PC-9 (cell line): ENCODE measurements at regions of chr9 and their contacts with region 1.

Region 1: DNA sequence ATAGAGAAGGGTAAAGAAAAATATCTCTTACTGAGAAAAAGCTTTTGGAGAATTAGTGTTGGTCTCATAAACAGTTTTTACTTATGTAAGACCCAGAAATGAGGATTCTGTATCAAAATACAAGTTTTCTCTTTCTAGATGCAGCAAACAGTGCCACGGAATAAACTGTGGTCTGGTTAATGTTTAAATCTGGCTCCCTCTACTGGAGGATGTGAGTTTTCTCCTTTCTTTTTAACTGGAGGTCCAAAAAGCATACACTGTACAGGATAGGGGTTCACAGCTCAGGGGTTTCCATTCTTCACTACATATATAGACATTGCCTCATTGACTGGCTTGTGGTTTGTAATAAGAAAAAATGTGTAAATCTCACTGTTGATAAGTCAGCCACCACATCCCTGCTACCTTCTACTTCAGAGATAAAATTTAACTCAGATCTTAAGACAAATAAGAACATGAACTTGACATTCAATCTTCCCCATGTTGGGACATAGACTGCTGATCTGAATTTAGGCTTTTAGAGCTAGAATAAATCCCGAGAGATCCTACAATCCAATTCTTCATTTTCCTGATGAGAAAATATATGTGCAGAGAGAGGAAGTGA is 98.9 kb downstream of the CFAP95 start:
- DNase-seq: peak; percentile 8 to 54
- H3K4me3 ChIP-seq: no peak overlapping the region
- H3K27ac ChIP-seq: no peak overlapping the region
- H3K4me1 ChIP-seq: 0 out of 2 replicates have a peak, but pooled peaks cover 3% of the 10 kb centered on the region
- H3K27me3 ChIP-seq: no peaks in the 10 kb centered on the region
- CTCF ChIP-seq: peak; percentile 81

Region 2: DNA sequence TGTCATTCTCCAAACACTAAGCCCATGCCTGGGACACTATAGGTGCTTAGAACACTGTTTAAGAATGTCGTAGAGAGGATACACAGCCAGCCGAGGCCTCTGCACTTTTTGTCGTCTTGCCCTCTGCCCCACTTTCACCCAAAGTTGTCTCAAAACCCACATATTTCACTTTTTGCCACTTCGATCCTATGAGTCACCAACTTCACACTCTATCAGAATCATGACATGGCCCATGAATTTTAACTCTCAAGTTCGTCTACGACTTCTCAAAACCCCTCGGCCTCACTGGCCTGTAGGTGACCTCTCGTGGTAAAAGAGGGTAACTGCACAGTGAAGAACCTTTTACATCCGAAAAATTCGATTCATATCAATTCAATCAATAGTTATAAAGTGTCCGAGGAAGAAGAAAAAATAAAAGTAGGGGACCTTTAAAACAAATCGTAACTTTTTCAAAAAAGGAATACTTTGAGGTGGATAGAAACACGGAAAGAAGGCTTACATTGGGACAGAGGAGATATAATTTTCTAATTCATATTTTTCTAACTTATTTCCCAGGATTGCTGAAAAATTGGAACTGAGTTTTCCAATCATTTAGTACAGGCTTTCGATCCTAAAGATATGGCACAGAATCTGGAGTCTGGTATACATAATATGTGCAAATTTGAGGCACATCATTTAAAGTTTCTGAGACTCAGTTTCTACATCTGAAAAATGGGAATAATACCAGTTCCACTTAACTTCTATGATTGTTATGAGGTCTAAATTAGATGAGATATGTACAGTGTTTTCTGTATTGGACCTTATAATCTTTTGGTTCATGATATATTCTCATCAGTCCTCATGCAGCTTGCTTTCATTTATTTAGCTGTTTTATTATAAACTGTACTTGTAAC is 370.0 kb before region 1 on chr9:
- CTCF ChIA-PET with region 1: no interaction called
- POLR2A ChIA-PET with region 1: no interaction called
- intact Hi-C with region 1: loop called (anchors 5 kb)
- DNase-seq: peak; percentile 29 to 40
- H3K4me3 ChIP-seq: no peak overlapping the region
- H3K27ac ChIP-seq: no peak overlapping the region
- H3K4me1 ChIP-seq: no peaks in the 10 kb centered on the region
- H3K27me3 ChIP-seq: 0 out of 2 replicates have a peak, but pooled peaks cover 4% of the 10 kb centered on the region
- CTCF ChIP-seq: peak; percentile 96

Region 3: GRCh38 chr9:69759421-69760277 is 159.9 kb before region 1 on chr9 and contains the start of gene PTAR1:
- CTCF ChIA-PET with region 1: no interaction called
- POLR2A ChIA-PET with region 1: no interaction called
- intact Hi-C with region 1: loop called (anchors 2 kb)
- DNase-seq: peak; percentile 61 to 92
- H3K4me3 ChIP-seq: peak within 1 kb of the TSS; percentile 67
- H3K27ac ChIP-seq: peak within 1 kb of the TSS; percentile 71
- H3K4me1 ChIP-seq: peaks cover 15% of the 10 kb centered on the region
- H3K27me3 ChIP-seq: no peaks in the 10 kb centered on the region
- CTCF ChIP-seq: no peak
- total RNA-seq, gene PTAR1: 44.9 and 47.3 TPM in 2 replicates

Region 4: GRCh38 chr9:69822091-69822750 is 97.3 kb before region 1 on chr9:
- CTCF ChIA-PET with region 1: no interaction called
- POLR2A ChIA-PET with region 1: no interaction called
- intact Hi-C with region 1: loop called (anchors 10 kb)
- DNase-seq: no peak
- H3K4me3 ChIP-seq: no peak overlapping the region
- H3K27ac ChIP-seq: no peak overlapping the region
- H3K4me1 ChIP-seq: no peaks in the 10 kb centered on the region
- H3K27me3 ChIP-seq: no peaks in the 10 kb centered on the region
- CTCF ChIP-seq: no peak

Region 5: DNA sequence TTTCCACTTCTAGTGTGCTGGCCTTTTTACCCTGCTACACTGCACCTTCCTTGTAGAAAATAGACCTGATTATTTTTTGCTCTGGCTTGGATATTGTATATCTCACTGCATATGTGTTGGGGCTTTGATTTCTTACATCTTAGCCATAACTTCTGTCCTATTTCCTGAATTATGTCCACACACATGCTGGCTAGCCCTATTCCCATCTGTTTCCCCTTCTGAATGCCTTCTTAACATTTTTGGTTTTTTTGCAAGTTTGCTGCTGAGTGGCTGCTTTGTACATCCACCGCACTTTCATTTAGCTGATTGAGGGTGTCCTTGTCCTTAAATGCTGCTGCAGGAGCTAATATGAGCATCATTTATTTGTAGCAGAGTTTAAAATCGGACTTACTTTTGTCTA is 72.1 kb before region 1 on chr9:
- CTCF ChIA-PET with region 1: interaction called, 13 read pairs
- POLR2A ChIA-PET with region 1: no interaction called
- intact Hi-C with region 1: no loop called
- DNase-seq: no peak
- H3K4me3 ChIP-seq: no peak overlapping the region
- H3K27ac ChIP-seq: no peak overlapping the region
- H3K4me1 ChIP-seq: no peaks in the 10 kb centered on the region
- H3K27me3 ChIP-seq: no peaks in the 10 kb centered on the region
- CTCF ChIP-seq: no peak

Region 6: GRCh38 chr9:69877854-69878514 is 41.6 kb before region 1 on chr9:
- CTCF ChIA-PET with region 1: no interaction called
- POLR2A ChIA-PET with region 1: no interaction called
- intact Hi-C with region 1: loop called (anchors 1 kb)
- DNase-seq: peak in 1 of 2 experiments; percentile 37
- H3K4me3 ChIP-seq: no peak overlapping the region
- H3K27ac ChIP-seq: no peak overlapping the region
- H3K4me1 ChIP-seq: 0 out of 2 replicates have a peak, but pooled peaks cover 5% of the 10 kb centered on the region
- H3K27me3 ChIP-seq: no peaks in the 10 kb centered on the region
- CTCF ChIP-seq: peak; percentile 73

Region 7: GRCh38 chr9:69885474-69885929 is 34.1 kb before region 1 on chr9:
- CTCF ChIA-PET with region 1: no interaction called
- POLR2A ChIA-PET with region 1: no interaction called
- intact Hi-C with region 1: loop called (anchors 1 kb)
- DNase-seq: peak; percentile 73 to 92
- H3K4me3 ChIP-seq: no peak overlapping the region
- H3K27ac ChIP-seq: peak overlapping the region; percentile 74
- H3K4me1 ChIP-seq: peaks cover 40% of the 10 kb centered on the region
- H3K27me3 ChIP-seq: no peaks in the 10 kb centered on the region
- CTCF ChIP-seq: no peak

Region 8: GRCh38 chr9:69949396-69949795 is 29.8 kb after region 1 on chr9:
- CTCF ChIA-PET with region 1: no interaction called
- POLR2A ChIA-PET with region 1: no interaction called
- intact Hi-C with region 1: no loop called
- DNase-seq: no peak
- H3K4me3 ChIP-seq: no peak overlapping the region
- H3K27ac ChIP-seq: no peak overlapping the region
- H3K4me1 ChIP-seq: peaks cover 18% of the 10 kb centered on the region
- H3K27me3 ChIP-seq: no peaks in the 10 kb centered on the region
- CTCF ChIP-seq: no peak

Region 9: GRCh38 chr9:70093944-70094343 is 174.4 kb after region 1 on chr9:
- CTCF ChIA-PET with region 1: no interaction called
- POLR2A ChIA-PET with region 1: no interaction called
- intact Hi-C with region 1: no loop called
- DNase-seq: peak; percentile 54 to 91
- H3K4me3 ChIP-seq: no peak overlapping the region
- H3K27ac ChIP-seq: no peak overlapping the region
- H3K4me1 ChIP-seq: peaks cover 13% of the 10 kb centered on the region; the same call in 1 of the 2 replicates
- H3K27me3 ChIP-seq: no peaks in the 10 kb centered on the region
- CTCF ChIP-seq: no peak